ENCODE measurements at regions of chr1 and their contacts with region 1.

Region 1: GRCh38 chr1:26279456-26280332 is at the start of gene SH3BGRL3:
- DNase-seq: peak; percentile 73 to 92
- ATAC-seq: peak; percentile 54 to 80 (median 69)
- H3K4me3 ChIP-seq: peak within 1 kb of the TSS; percentile 88
- H3K4me3 Mint-ChIP-seq: peak within 1 kb of the TSS; percentile 93
- H3K27ac ChIP-seq: peak within 1 kb of the TSS; percentile 85
- H3K27ac Mint-ChIP-seq: peak within 1 kb of the TSS; percentile 82 to 86
- H3K4me1 ChIP-seq: peaks cover 92% of the 10 kb centered on the region
- H3K4me1 Mint-ChIP-seq: peaks cover 75 to 85% of the 10 kb centered on the region in 2 donors
- H3K27me3 ChIP-seq: no peaks in the 10 kb centered on the region
- H3K27me3 Mint-ChIP-seq: no peaks in the 10 kb centered on the region
- CTCF ChIP-seq: no peak
- total RNA-seq, gene SH3BGRL3: 396 to 488 (median 437) TPM

Region 2: GRCh38 chr1:26259578-26259977 is 20.1 kb before region 1 on chr1:
- intact Hi-C with region 1: no loop called
- DNase-seq: no peak
- ATAC-seq: peak in 1 of 3 donors; percentile 48
- H3K4me3 ChIP-seq: no peak overlapping the region
- H3K4me3 Mint-ChIP-seq: no peak overlapping the region
- H3K27ac ChIP-seq: no peak overlapping the region
- H3K27ac Mint-ChIP-seq: no peak overlapping the region
- H3K4me1 ChIP-seq: no peaks in the 10 kb centered on the region
- H3K4me1 Mint-ChIP-seq: no peaks in the 10 kb centered on the region
- H3K27me3 ChIP-seq: no peaks in the 10 kb centered on the region
- H3K27me3 Mint-ChIP-seq: no peaks in the 10 kb centered on the region
- CTCF ChIP-seq: no peak

Region 3: GRCh38 chr1:26378088-26378878 is 98.6 kb after region 1 on chr1:
- intact Hi-C with region 1: loop called (anchors 5 kb)
- DNase-seq: peak; percentile 85 to 93
- ATAC-seq: peak; percentile 89 to 97 (median 93)
- H3K4me3 ChIP-seq: peak overlapping the region; percentile 0
- H3K4me3 Mint-ChIP-seq: peak overlapping the region; percentile 92
- H3K27ac ChIP-seq: peak overlapping the region; percentile 69
- H3K27ac Mint-ChIP-seq: peak overlapping the region; percentile 82 to 93
- H3K4me1 ChIP-seq: peaks cover 64% of the 10 kb centered on the region
- H3K4me1 Mint-ChIP-seq: peaks cover 62 to 68% of the 10 kb centered on the region in 2 donors
- H3K27me3 ChIP-seq: no peaks in the 10 kb centered on the region
- H3K27me3 Mint-ChIP-seq: peaks cover 6% of the 10 kb centered on the region in 2 donors
- CTCF ChIP-seq: no peak

Region 4: DNA sequence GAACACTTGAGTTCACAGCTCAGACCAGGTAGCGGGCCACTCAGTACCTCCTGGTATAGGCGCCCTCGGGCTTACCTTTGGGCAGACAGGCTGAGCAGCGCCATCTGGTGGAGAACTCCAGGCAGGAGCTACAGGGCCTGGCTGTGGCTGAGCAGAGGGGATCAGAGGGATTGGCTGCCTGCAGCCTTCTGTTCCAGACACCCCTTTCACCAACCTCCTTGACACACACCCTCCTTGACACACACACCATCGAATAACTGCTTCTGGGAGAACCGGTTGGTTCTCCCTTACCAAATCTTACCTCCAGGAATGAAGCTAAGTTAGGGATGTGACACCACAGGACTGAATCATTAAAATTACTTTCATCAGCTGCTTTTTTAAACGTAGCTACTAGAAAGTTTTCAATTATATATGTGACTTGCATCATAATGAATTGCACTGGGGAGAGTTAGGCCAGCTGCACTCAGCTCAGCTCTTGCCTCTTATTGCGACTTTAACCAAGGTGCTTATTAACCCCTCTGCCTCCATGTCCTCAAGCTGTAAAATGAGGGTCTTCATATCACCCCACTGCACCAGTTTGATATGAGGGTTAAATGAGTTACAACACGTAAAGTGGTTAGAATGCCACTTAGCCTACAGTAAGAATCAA is 137.5 kb after region 1 on chr1:
- intact Hi-C with region 1: loop called (anchors 1 kb)
- DNase-seq: peak; percentile 77 to 92
- ATAC-seq: peak; percentile 90 to 99 (median 99)
- H3K4me3 ChIP-seq: no peak overlapping the region
- H3K4me3 Mint-ChIP-seq: no peak overlapping the region
- H3K27ac ChIP-seq: no peak overlapping the region
- H3K27ac Mint-ChIP-seq: no peak overlapping the region
- H3K4me1 ChIP-seq: no peaks in the 10 kb centered on the region
- H3K4me1 Mint-ChIP-seq: no peaks in the 10 kb centered on the region
- H3K27me3 ChIP-seq: peaks cover 24% of the 10 kb centered on the region
- H3K27me3 Mint-ChIP-seq: peaks cover 38 to 47% of the 10 kb centered on the region in 2 donors
- CTCF ChIP-seq: peak; percentile 84

Region 5: DNA sequence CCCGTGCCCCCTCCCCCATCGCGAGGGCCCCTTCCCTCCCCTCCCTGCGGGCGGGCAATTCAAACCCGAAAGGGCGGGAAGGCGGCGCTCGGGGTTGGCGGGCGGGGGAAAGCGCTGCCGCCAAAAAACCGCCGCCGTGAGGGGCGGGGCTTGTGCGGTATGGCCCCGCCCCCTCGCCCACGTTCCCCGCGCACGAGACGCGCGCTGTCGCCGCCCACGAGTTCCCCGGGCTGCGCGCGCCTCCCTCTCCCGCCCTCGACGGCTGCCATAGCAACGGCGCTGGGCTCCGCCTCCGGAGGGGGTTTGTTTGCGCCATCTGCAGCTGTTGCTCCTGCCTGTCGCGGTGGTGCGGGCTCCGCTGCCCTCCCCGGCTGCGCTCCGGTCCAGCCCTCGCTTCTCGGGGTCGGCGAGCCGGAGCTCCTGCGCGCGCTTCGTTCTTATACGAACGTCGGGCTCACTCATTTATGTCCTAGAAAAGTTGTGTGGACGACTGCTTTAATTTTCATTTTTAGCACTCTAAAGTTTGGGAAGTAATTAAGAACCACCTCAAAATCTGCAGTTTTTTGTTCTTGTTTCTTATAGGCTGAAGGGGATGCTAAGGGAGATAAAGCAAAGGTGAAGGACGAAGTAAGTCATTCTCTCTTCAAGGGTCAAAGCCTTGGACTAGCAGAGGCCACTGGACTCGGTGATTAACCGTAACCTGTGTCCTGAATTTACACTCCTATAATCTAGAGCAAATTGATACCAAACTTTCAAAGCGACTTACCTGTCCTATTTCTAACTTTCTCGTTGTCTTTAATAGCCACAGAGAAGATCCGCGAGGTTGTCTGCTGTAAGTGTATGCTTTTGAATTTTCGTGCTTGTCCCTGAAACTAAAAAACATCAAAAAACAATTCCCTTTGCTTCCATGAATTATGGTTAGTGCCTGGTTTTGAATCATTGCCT is 193.5 kb after region 1 on chr1:
- intact Hi-C with region 1: loop called (anchors 2 kb)
- DNase-seq: peak; percentile 94 to 98
- ATAC-seq: peak; percentile 86 to 96 (median 87)
- H3K4me3 ChIP-seq: peak overlapping the region; percentile 60
- H3K4me3 Mint-ChIP-seq: peak overlapping the region; percentile 89
- H3K27ac ChIP-seq: peak overlapping the region; percentile 83
- H3K27ac Mint-ChIP-seq: peak overlapping the region; percentile 90 to 91
- H3K4me1 ChIP-seq: peaks cover 28% of the 10 kb centered on the region
- H3K4me1 Mint-ChIP-seq: peaks cover 37 to 45% of the 10 kb centered on the region in 2 donors
- H3K27me3 ChIP-seq: no peaks in the 10 kb centered on the region
- H3K27me3 Mint-ChIP-seq: no peaks in the 10 kb centered on the region
- CTCF ChIP-seq: no peak